ENCODE measurements at regions of chr16 and their contacts with region 1.

Region 1: DNA sequence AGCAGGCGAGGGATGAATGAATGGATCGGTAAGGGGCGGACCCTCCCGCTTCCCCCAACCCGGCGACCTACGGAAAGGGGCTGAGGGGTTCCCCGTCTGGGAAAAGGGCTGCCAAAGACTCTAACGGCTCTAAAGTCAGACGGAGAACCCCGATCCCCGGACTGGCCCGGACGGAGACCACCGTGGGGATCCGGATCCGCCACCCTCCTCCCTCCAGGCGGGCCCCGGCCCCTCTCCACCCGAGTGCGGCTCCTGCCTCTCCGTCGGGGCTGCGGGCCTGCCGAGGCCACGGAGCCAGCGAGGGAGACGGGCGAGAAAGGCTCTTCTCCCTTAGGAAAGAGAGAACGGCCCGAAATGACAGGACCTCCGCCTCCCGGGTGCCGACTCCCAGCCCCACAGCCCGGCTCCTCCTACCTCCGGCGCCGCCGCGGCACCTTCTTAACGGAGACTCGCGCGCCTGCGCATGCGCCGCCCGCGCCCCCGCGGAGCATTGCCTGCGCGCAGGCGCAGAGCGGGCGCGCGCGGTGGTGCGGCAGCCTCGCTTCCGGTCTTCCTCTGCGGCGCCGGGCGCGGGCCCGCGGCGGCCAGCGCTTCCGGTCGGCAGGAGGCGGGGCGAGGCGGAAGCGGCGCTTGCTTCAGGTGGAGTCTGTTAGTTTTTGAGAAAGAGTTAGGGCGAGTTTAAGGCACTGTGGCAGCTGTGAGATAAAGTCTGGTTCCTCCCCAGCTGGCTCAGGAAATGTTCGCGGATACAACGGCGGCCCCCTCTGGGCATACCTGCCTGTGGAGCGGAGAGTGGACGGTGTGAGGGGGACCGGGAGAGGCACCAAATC is at the start of gene SLX4:
- DNase-seq: peak; percentile 95
- ATAC-seq: peak; percentile 90
- H3K4me3 Mint-ChIP-seq: peak within 1 kb of the TSS; percentile 100
- H3K27ac Mint-ChIP-seq: peak within 1 kb of the TSS; percentile 98
- H3K4me1 Mint-ChIP-seq: peaks cover 41% of the 10 kb centered on the region
- H3K27me3 Mint-ChIP-seq: no peaks in the 10 kb centered on the region
- total RNA-seq, gene SLX4: 10.7 to 11.7 TPM

Region 2: DNA sequence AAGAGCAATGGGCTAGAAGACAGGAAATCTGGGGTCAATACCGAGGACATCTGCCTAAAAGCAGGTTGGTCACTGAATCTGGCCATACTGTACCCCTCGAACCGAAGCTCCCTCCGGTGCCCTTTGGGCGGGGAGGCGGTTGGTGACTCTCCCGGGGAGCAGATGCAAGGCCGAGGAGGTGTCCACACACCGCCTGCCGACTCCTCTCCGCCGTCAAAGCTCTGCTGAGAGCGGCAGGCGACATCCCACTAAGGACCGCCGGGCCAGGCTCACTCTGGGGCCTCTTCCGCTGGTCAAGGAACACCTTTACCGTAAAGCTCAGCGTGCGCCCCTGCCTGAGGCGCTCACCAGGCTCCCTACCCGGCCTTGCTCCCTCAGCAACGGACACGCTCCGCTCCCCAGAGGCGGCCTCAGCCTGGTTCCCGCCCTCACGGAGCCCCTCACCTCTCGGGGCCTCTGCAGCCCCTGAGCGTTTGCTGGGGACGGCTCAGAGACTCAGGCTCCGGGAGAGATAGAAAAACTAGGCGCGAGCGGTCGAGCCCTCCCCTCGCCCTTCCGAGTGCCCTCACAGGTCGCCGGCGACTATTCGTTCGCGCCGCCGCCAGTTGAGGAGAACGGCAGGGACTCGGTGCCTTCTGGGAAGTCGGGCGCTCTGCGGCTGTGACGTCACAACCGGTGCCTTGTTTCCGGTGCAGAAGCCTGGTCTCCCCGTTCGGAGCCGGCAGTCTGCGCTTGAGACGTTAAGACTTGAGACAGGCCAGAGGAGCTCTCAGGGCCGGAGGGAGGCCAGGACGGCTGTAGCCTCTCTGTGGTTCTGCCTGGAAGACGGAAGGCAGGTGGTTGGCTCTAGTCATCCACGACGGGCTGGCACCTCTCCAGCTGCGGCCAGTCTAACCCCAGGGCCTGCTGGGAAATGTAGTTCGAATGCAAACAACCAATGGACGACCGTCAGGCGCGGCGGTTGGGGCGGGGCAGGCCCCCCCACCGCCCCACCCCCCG is 376.5 kb before region 1 on chr16 and contains the start of gene ZNF200:
- CTCF ChIA-PET with region 1: no interaction called
- POLR2A ChIA-PET with region 1: no interaction called
- intact Hi-C with region 1: loop called in 1 of 2 experiments (anchors 1 kb)
- DNase-seq: peak; percentile 98
- ATAC-seq: peak; percentile 94
- H3K4me3 Mint-ChIP-seq: peak within 1 kb of the TSS; percentile 89
- H3K27ac Mint-ChIP-seq: peak within 1 kb of the TSS; percentile 96
- H3K4me1 Mint-ChIP-seq: peaks cover 30% of the 10 kb centered on the region
- H3K27me3 Mint-ChIP-seq: no peaks in the 10 kb centered on the region
- total RNA-seq, gene ZNF200: 8.3 to 9.0 TPM

Region 3: DNA sequence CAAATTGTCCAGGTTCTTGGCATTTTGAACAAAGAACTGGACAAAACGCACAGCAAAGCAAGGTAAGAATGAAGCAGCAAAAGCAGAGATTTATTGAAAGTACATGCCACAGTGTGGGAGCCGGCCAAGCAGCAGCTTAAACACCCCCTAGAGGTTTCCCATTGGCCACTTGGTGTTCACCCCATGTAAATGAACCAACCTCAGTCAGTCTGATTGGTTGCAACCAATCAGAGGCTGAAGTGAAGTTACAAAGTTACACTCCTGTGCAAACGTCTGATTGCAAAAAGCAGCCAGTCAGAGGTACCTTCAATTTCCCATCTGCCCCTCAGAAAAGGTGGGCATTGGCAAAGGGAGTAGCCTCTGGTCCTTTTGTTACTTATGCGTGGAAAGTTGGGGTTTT is 336.9 kb before region 1 on chr16:
- CTCF ChIA-PET with region 1: no interaction called
- POLR2A ChIA-PET with region 1: no interaction called
- intact Hi-C with region 1: no loop called
- DNase-seq: no peak
- ATAC-seq: no peak
- H3K4me3 Mint-ChIP-seq: no peak overlapping the region
- H3K27ac Mint-ChIP-seq: no peak overlapping the region
- H3K4me1 Mint-ChIP-seq: no peaks in the 10 kb centered on the region
- H3K27me3 Mint-ChIP-seq: peaks cover 1% of the 10 kb centered on the region

Region 4: GRCh38 chr16:3400779-3401688 is 210.3 kb before region 1 on chr16 and contains the starts of genes ZNF174 and ZSCAN32:
- CTCF ChIA-PET with region 1: no interaction called
- POLR2A ChIA-PET with region 1: no interaction called
- intact Hi-C with region 1: loop called in 1 of 2 experiments (anchors 1 kb)
- DNase-seq: peak; percentile 99
- ATAC-seq: peak; percentile 99
- H3K4me3 Mint-ChIP-seq: peak within 1 kb of the TSS; percentile 91
- H3K27ac Mint-ChIP-seq: peak within 1 kb of the TSS; percentile 83
- H3K4me1 Mint-ChIP-seq: peaks cover 49% of the 10 kb centered on the region
- H3K27me3 Mint-ChIP-seq: no peaks in the 10 kb centered on the region
- total RNA-seq, gene ZNF174: 7.4 to 9.5 TPM
- total RNA-seq, gene ZSCAN32: 15.7 to 17.4 TPM

Region 5: DNA sequence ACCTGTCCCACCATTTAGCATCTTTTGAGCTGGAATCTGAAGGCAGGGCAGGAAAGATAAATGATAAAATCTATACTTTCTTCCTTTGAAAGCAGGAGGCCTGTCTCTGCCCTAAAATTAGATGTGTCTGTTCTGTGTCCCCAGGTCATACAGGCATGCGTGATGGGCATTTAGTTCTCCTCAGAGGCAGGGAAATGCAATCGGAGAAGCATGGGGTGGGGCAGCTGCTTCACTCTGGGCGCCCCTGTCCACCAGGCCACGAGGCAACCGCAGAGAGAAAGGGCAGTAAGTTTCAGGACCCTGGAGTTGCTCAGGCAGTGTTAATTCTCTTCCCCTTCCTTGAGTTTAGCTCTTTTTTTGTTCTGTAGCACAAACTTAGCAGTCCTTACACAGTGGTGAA is 85.4 kb before region 1 on chr16:
- CTCF ChIA-PET with region 1: no interaction called
- POLR2A ChIA-PET with region 1: no interaction called
- intact Hi-C with region 1: loop called in 1 of 2 experiments (anchors 5 kb)
- DNase-seq: no peak
- ATAC-seq: no peak
- H3K4me3 Mint-ChIP-seq: no peak overlapping the region
- H3K27ac Mint-ChIP-seq: no peak overlapping the region
- H3K4me1 Mint-ChIP-seq: no peaks in the 10 kb centered on the region
- H3K27me3 Mint-ChIP-seq: no peaks in the 10 kb centered on the region

Region 6: GRCh38 chr16:3754081-3754703 is 142.8 kb after region 1 on chr16:
- CTCF ChIA-PET with region 1: no interaction called
- POLR2A ChIA-PET with region 1: no interaction called
- intact Hi-C with region 1: no loop called
- DNase-seq: no peak
- ATAC-seq: no peak
- H3K4me3 Mint-ChIP-seq: no peak overlapping the region
- H3K27ac Mint-ChIP-seq: no peak overlapping the region
- H3K4me1 Mint-ChIP-seq: peaks cover 8% of the 10 kb centered on the region
- H3K27me3 Mint-ChIP-seq: no peaks in the 10 kb centered on the region

Region 7: DNA sequence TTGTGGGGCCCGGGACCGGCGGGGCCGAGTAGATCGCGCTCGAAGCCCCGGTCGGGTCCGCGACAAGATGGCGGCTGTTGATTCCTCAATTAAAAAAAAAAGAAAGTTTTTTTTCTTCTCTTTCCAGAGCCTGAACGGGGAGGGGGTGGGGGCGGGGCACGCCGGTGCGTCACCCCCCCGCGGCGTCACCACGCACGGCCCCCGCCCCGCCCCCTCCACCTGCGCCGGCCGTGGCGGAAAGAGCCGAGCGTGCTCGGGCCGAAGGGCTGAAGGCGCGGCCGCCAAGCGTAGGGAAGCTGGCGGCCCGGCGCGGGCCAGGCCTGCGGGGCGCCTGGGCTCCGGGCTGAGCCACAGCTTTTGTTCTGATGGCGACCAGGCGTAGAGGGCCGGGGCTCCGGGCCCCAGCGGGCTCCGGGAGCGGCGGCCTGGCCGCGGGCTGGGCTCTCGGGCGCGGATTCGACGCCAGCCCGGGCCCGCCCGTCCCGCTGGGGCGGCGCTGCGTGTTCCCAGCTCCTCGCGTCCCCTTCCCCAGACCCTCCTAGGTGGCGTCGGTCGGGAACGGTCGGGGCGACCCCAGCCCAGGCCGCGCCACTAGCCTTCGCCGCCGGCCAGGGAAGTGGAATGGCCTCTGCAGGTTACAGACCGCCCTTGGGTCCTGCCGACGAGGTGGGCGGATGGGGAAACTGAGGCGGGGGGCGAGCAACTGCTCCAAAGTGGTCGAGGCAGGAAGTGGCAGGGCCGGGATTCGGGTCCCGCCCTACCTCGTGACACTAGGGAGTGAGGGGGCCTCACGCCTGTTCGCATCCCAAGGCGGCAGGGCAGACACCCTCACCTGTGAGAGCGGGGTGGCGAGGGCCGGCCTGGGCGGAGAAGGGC is 269.5 kb after region 1 on chr16 and contains the start of gene CREBBP:
- CTCF ChIA-PET with region 1: no interaction called
- POLR2A ChIA-PET with region 1: no interaction called
- intact Hi-C with region 1: loop called in 1 of 2 experiments (anchors 1 kb)
- DNase-seq: peak; percentile 93
- ATAC-seq: peak; percentile 89
- H3K4me3 Mint-ChIP-seq: peak within 1 kb of the TSS; percentile 79
- H3K27ac Mint-ChIP-seq: peak within 1 kb of the TSS; percentile 69
- H3K4me1 Mint-ChIP-seq: peaks cover 36% of the 10 kb centered on the region
- H3K27me3 Mint-ChIP-seq: peaks cover 6% of the 10 kb centered on the region
- total RNA-seq, gene CREBBP: 28.1 to 37.4 TPM